Natural killer cell (primary cell): ENCODE measurements at regions of chr14 and their contacts with region 1.

Region 1: GRCh38 chr14:54566410-54567223 is at the start of gene SAMD4A:
- DNase-seq: peak; percentile 28 to 74
- ATAC-seq: peak; percentile 32 to 42 (median 40)
- H3K4me3 ChIP-seq: peak within 1 kb of the TSS; percentile 58
- H3K4me3 Mint-ChIP-seq: peak within 1 kb of the TSS; percentile 92
- H3K27ac ChIP-seq: no peak within 1 kb of the TSS
- H3K27ac Mint-ChIP-seq: peak within 1 kb of the TSS in 1 of 2 donors; percentile 76
- H3K4me1 ChIP-seq: peaks cover 33% of the 10 kb centered on the region
- H3K4me1 Mint-ChIP-seq: peaks cover 20 to 30% of the 10 kb centered on the region in 2 donors
- H3K27me3 ChIP-seq: peaks cover 57% of the 10 kb centered on the region
- H3K27me3 Mint-ChIP-seq: peaks cover 25 to 26% of the 10 kb centered on the region in 2 donors
- CTCF ChIP-seq: no peak
- total RNA-seq, gene SAMD4A: 0.70 to 1.6 (median 1.4) TPM

Region 2: GRCh38 chr14:54627540-54628363 is 61.1 kb after region 1 on chr14:
- intact Hi-C with region 1: loop called (anchors 5 kb)
- DNase-seq: peak in 1 of 2 donors; percentile 65
- ATAC-seq: peak; percentile 84 to 91 (median 86)
- H3K4me3 ChIP-seq: peak overlapping the region; percentile 16
- H3K4me3 Mint-ChIP-seq: peak overlapping the region; percentile 91
- H3K27ac ChIP-seq: peak overlapping the region; percentile 90
- H3K27ac Mint-ChIP-seq: peak overlapping the region; percentile 93 to 97
- H3K4me1 ChIP-seq: peaks cover 22% of the 10 kb centered on the region
- H3K4me1 Mint-ChIP-seq: peaks cover 46 to 47% of the 10 kb centered on the region in 2 donors
- H3K27me3 ChIP-seq: no peaks in the 10 kb centered on the region
- H3K27me3 Mint-ChIP-seq: peaks cover 0 to 3% of the 10 kb centered on the region in 2 donors
- CTCF ChIP-seq: no peak

Region 3: DNA sequence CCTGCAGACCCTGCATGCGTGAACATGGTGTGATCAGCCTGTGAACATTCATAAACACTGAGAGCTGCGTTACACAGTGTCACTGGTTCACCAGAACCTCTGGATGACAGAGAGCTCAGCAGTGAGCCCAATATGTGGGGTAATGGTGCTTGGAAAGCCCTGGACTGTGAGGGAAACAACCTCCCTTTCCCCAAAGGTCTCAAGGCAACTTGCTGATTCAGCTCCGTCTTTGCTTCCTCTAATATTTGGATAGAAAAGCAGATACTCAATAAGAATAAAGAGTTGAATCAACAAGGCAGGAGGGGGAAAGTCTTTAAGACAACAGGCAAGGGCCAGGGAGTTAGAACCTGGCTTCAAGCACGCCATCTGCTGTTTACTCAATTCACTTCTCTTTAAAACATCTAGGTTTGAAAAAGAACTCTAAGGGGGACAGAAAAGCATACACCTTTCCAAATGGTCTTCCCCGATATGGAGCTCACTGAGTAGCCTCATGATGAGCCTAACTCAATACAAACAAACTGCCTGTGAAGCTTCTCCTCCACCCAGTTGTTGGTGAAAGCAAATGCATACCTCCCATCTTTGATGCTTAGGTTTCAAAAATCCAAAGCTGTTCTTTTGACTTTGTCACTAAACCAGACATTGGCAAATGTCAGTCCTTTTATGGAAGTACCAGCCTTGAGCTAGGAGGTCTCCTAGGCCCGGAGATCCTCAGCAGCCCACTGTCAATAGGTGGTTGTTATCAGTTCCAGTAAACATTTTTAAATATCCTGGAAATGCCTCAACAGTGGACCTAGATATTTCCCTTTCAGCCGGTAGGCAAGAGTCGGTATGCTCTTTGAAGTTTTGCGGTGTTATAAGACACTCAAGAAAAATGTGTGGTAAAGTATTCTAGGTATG is 76.4 kb after region 1 on chr14:
- intact Hi-C with region 1: loop called (anchors 1 kb)
- DNase-seq: peak in 1 of 2 donors; percentile 55
- ATAC-seq: peak in 1 of 3 donors; percentile 47
- H3K4me3 ChIP-seq: no peak overlapping the region
- H3K4me3 Mint-ChIP-seq: no peak overlapping the region
- H3K27ac ChIP-seq: no peak overlapping the region
- H3K27ac Mint-ChIP-seq: no peak overlapping the region
- H3K4me1 ChIP-seq: no peaks in the 10 kb centered on the region
- H3K4me1 Mint-ChIP-seq: no peaks in the 10 kb centered on the region
- H3K27me3 ChIP-seq: peaks cover 3% of the 10 kb centered on the region
- H3K27me3 Mint-ChIP-seq: peaks cover 30 to 46% of the 10 kb centered on the region in 2 donors
- CTCF ChIP-seq: peak; percentile 47

Region 4: DNA sequence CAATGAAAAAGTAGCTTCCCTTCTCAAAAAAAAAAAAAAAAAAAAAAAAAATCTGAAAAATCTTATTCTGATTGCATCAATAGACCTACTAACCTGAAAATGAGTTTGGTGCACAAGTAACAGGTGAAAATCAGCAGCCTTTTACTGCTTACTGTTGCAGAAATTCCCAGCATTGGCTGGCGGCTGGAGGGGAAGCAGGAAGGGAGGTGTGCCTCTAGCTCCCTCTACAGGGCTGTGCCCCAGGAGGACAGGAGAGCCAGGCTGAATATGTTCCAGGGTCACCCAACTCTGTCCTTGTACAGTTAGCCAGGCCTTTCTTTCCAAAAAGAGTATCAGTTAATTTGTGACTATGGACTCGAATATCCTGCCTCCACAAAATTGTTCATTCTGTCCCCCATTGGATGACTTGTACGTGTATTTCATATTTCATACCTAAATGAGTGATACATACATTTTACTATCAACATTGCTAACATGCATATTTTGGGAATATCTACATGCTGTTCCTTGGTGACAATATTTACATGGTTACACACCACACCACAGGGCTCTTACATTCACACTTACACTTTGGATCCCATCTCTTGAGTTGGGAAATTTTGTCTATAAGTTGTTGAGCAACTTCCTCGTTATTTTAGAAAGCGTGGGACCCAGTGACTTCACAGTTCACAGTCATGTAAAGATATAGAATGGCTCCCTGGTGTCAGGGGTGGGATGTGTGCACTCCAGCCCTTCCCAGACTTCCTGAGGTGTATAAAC is 125.1 kb after region 1 on chr14:
- intact Hi-C with region 1: loop called (anchors 1 kb)
- DNase-seq: peak; percentile 27 to 72
- ATAC-seq: peak; percentile 69 to 78 (median 70)
- H3K4me3 ChIP-seq: no peak overlapping the region
- H3K4me3 Mint-ChIP-seq: no peak overlapping the region
- H3K27ac ChIP-seq: no peak overlapping the region
- H3K27ac Mint-ChIP-seq: no peak overlapping the region
- H3K4me1 ChIP-seq: peaks cover 9% of the 10 kb centered on the region
- H3K4me1 Mint-ChIP-seq: peaks cover 12 to 15% of the 10 kb centered on the region in 2 donors
- H3K27me3 ChIP-seq: peaks cover 38% of the 10 kb centered on the region
- H3K27me3 Mint-ChIP-seq: peaks cover 58 to 89% of the 10 kb centered on the region in 2 donors
- CTCF ChIP-seq: peak; percentile 56

Region 5: DNA sequence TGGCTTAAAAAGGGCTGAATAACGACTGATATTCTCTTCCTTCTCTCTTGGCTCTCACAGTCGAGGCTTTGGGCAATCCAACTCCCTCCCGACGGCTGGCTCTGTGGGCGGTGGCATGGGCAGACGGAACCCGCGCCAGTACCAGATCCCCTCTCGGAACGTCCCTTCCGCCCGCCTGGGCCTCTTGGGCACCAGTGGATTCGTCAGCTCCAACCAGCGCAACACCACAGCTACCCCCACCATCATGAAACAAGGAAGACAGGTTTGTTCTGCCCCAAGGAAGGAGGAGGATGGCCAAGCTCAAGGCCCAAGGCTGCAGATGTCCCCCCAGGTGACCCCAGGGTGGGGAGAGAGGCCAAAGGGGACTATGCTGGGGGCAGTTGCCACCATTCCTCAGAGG is 208.3 kb after region 1 on chr14:
- intact Hi-C with region 1: loop called (anchors 1 kb)
- DNase-seq: no peak
- ATAC-seq: no peak
- H3K4me3 ChIP-seq: no peak overlapping the region
- H3K4me3 Mint-ChIP-seq: no peak overlapping the region
- H3K27ac ChIP-seq: no peak overlapping the region
- H3K27ac Mint-ChIP-seq: no peak overlapping the region
- H3K4me1 ChIP-seq: peaks cover 37% of the 10 kb centered on the region
- H3K4me1 Mint-ChIP-seq: peaks cover 33 to 39% of the 10 kb centered on the region in 2 donors
- H3K27me3 ChIP-seq: peaks cover 13% of the 10 kb centered on the region
- H3K27me3 Mint-ChIP-seq: peaks cover 51 to 58% of the 10 kb centered on the region in 2 donors
- CTCF ChIP-seq: no peak

Region 6: DNA sequence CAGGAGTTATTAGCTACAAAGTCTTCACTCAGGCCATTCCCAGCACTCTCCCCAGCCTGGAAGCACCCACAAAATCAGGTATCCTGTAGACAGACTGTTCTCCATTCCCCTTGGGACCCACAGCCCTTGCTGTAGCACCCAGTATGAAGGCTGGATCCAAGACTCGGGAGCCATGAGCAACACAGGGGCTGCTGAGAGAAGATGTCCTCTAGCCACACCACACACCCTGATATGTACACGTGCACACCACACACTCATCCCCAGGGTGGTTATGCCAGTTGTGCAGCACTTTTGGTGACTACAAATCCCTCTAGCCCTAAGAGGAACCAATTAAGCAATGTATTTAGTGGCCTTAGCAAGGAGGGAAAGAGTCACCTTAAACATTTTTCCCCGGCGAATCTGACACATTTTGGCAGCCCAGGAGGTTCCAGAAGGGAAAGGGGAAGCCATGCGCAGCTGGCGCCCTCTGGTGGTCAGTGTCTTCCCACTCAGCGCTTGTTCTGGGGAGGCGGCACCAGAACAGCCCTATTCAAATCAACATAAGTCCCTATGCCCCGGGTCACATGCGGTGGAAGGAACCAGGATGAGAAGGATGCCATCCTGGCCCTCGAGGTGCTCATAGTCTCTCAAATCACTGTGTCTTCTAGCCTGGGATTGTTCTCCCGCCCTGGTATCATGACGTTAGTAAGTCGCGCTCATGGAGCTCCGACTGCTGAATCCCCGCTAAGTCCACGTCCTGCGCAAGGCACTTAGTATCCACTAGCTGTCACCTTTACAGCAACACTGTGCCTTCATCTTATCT is 239.1 kb after region 1 on chr14:
- intact Hi-C with region 1: loop called (anchors 1 kb)
- DNase-seq: peak; percentile 52 to 83
- ATAC-seq: peak; percentile 70 to 90 (median 75)
- H3K4me3 ChIP-seq: no peak overlapping the region
- H3K4me3 Mint-ChIP-seq: no peak overlapping the region
- H3K27ac ChIP-seq: no peak overlapping the region
- H3K27ac Mint-ChIP-seq: no peak overlapping the region
- H3K4me1 ChIP-seq: peaks cover 5% of the 10 kb centered on the region
- H3K4me1 Mint-ChIP-seq: peaks cover 5 to 6% of the 10 kb centered on the region in 2 donors
- H3K27me3 ChIP-seq: no peaks in the 10 kb centered on the region
- H3K27me3 Mint-ChIP-seq: peaks cover 15 to 26% of the 10 kb centered on the region in 2 donors
- CTCF ChIP-seq: peak; percentile 93

Region 7: DNA sequence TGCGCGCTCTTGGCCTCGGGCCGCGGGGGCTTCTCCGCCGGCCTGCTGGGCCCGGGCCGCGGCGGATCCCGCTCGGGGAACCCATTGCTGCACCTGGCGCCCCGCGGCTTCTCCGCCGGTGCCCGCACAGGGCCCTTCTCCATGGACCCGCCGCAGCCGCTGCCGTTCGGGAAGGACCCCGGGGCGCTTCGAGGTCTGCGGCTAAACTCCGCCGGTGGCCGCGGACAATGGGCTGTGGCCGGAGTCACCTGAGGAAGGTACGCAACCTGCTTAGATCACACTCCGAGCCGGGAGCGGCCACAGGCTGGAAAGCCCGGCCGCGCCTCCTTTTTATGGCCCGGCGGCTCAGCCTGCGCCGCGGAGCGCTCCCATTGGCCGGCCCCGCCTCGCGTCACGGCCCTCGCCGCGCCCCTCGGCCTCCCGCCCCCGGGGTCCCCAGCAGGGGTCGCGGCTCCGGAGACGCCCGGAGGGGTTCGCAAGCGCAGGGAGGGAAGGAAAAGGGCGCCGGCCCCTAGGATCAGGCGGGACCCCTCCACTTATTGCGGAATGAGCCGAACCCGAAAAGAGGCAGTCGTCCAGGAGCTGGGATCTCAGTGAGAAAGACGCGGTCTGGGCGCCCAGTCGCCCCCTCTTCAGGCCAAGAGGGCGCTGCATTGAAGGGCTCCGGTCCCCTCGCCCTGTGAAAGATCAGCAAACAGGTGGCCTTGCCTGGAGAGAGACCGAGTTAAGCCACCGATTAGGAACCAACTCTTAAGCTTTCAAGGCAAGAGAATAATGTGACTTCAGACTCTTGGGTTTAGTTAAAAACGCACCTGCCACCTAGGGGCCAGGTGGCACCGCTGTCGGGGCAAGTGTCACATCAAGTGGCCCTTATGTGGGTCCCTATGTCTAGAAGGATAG is 336.2 kb after region 1 on chr14 and contains the start of gene GCH1:
- intact Hi-C with region 1: loop called (anchors 10 kb)
- DNase-seq: peak; percentile 77 to 89
- ATAC-seq: peak; percentile 69 to 83 (median 79)
- H3K4me3 ChIP-seq: peak within 1 kb of the TSS; percentile 80
- H3K4me3 Mint-ChIP-seq: peak within 1 kb of the TSS; percentile 87
- H3K27ac ChIP-seq: peak within 1 kb of the TSS; percentile 92
- H3K27ac Mint-ChIP-seq: peak within 1 kb of the TSS; percentile 87 to 90
- H3K4me1 ChIP-seq: peaks cover 18% of the 10 kb centered on the region
- H3K4me1 Mint-ChIP-seq: peaks cover 24 to 39% of the 10 kb centered on the region in 2 donors
- H3K27me3 ChIP-seq: no peaks in the 10 kb centered on the region
- H3K27me3 Mint-ChIP-seq: no peaks in the 10 kb centered on the region
- CTCF ChIP-seq: peak; percentile 64
- total RNA-seq, gene GCH1: 51.7 to 71.5 (median 52.6) TPM